Common myeloid progenitor, CD34-positive (primary cell): ENCODE measurements at regions of chr21 and their contacts with region 1.

Region 1: GRCh38 chr21:32826329-32827167 is 55.0 kb upstream of the PAXBP1 start:
- DNase-seq: peak; percentile 63 to 77 (median 75)
- H3K4me3 ChIP-seq: no peak overlapping the region
- H3K27ac ChIP-seq: no peak overlapping the region
- H3K4me1 ChIP-seq: peaks cover 0 to 6% (median under 1%) of the 10 kb centered on the region in 4 experiments
- H3K27me3 ChIP-seq: no peaks in the 10 kb centered on the region

Region 2: GRCh38 chr21:32653311-32653901 is 173.1 kb before region 1 on chr21:
- CTCF ChIA-PET with region 1: interaction called, 15 read pairs
- POLR2A ChIA-PET with region 1: no interaction called
- DNase-seq: peak; percentile 37 to 61 (median 51)
- H3K4me3 ChIP-seq: no peak overlapping the region
- H3K27ac ChIP-seq: no peak overlapping the region
- H3K4me1 ChIP-seq: no peaks in the 10 kb centered on the region
- H3K27me3 ChIP-seq: no peaks in the 10 kb centered on the region

Region 3: DNA sequence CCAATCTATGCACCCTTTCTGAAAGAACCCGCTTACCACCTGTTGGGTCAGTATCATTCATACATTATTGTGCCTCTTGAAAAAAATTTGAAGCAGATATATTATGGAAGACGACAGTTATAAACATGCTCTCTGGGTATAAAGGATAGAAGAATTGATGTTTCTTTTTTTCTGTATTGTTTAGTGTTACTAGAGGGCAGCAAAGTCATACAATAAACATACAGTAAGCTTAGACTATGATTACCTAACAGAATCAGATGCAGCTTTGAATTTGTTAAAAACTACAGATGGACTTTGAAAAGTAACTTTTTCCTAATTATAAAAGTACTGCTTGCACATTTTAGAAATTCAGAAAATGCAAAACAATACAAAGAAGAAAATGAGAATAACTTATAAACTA is 43.9 kb before region 1 on chr21:
- CTCF ChIA-PET with region 1: interaction called, 16 read pairs
- POLR2A ChIA-PET with region 1: no interaction called
- DNase-seq: peak in 1 of 3 donors; percentile 21
- H3K4me3 ChIP-seq: no peak overlapping the region
- H3K27ac ChIP-seq: no peak overlapping the region
- H3K4me1 ChIP-seq: peaks cover 0 to 7% (median 3%) of the 10 kb centered on the region in 4 experiments
- H3K27me3 ChIP-seq: no peaks in the 10 kb centered on the region